ENCODE measurements at regions of chr12 and their contacts with region 1.

Region 1: DNA sequence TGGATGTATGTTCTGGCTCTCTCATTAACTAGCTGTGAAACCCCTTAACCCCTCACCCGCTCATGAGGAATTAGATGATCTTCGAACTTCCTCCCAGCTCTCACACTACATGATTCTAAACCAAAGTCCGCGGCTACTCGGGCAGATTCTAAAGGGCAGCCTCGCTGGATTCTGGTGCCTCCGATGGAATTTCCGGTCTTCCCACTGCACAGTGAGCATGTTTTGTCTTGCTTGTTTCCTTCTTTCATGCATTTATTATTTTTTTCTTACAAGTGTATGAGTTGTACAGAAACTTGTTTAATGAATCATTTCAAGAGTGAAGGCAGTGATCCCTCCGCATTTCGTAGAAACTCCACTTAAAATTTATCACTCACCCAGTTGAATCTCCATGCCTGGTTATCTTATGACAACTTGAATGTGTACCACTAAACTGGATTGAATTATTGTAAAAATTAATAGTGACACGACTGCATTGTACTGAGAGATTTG is 4.5 kb upstream of the HCAR3 start:
- DNase-seq: peak; percentile 40
- H3K4me3 Mint-ChIP-seq: peak overlapping the region; percentile 6
- H3K27ac Mint-ChIP-seq: peak overlapping the region; percentile 78
- H3K4me1 Mint-ChIP-seq: peaks cover 39% of the 10 kb centered on the region
- H3K27me3 Mint-ChIP-seq: peaks cover 3% of the 10 kb centered on the region

Region 2: GRCh38 chr12:122413516-122414404 is 307.3 kb before region 1 on chr12:
- CTCF ChIA-PET with region 1: no interaction called
- POLR2A ChIA-PET with region 1: no interaction called
- intact Hi-C with region 1: loop called (anchors 2 kb)
- DNase-seq: no peak
- H3K4me3 Mint-ChIP-seq: peak overlapping the region; percentile 71
- H3K27ac Mint-ChIP-seq: peak overlapping the region; percentile 96
- H3K4me1 Mint-ChIP-seq: peaks cover 56% of the 10 kb centered on the region
- H3K27me3 Mint-ChIP-seq: no peaks in the 10 kb centered on the region

Region 3: GRCh38 chr12:122646517-122647217 is 74.4 kb before region 1 on chr12:
- CTCF ChIA-PET with region 1: no interaction called
- POLR2A ChIA-PET with region 1: interaction called, 3 read pairs
- intact Hi-C with region 1: loop called (anchors 2 kb)
- DNase-seq: peak; percentile 80
- H3K4me3 Mint-ChIP-seq: peak overlapping the region; percentile 47
- H3K27ac Mint-ChIP-seq: peak overlapping the region; percentile 14
- H3K4me1 Mint-ChIP-seq: peaks cover 14% of the 10 kb centered on the region
- H3K27me3 Mint-ChIP-seq: no peaks in the 10 kb centered on the region

Region 4: GRCh38 chr12:122732170-122732569 is 11.1 kb after region 1 on chr12:
- CTCF ChIA-PET with region 1: no interaction called
- POLR2A ChIA-PET with region 1: interaction called, 5 read pairs
- intact Hi-C with region 1: loop called (anchors 1 kb)
- DNase-seq: peak; percentile 65
- H3K4me3 Mint-ChIP-seq: no peak overlapping the region
- H3K27ac Mint-ChIP-seq: no peak overlapping the region
- H3K4me1 Mint-ChIP-seq: peaks cover 46% of the 10 kb centered on the region
- H3K27me3 Mint-ChIP-seq: peaks cover 6% of the 10 kb centered on the region

Region 5: GRCh38 chr12:122752464-122753318 is 31.6 kb after region 1 on chr12 and contains the start of gene DENR:
- CTCF ChIA-PET with region 1: no interaction called
- POLR2A ChIA-PET with region 1: interaction called, 4 read pairs
- intact Hi-C with region 1: loop called (anchors 1 kb)
- DNase-seq: peak; percentile 100
- H3K4me3 Mint-ChIP-seq: peak within 1 kb of the TSS; percentile 94
- H3K27ac Mint-ChIP-seq: peak within 1 kb of the TSS; percentile 86
- H3K4me1 Mint-ChIP-seq: peaks cover 44% of the 10 kb centered on the region
- H3K27me3 Mint-ChIP-seq: no peaks in the 10 kb centered on the region
- total RNA-seq, gene DENR: 56.9 to 58.2 TPM

Measured in activated CD4-positive, alpha-beta memory T cell treated with anti-CD3 and anti-CD28 coated beads for 36 hours (primary cell).